ENCODE measurements at regions of chr12 and their contacts with region 1.

Region 1: GRCh38 chr12:100348657-100349454 is 8.0 kb upstream of the SLC17A8 start:
- DNase-seq: no peak
- ATAC-seq: no peak
- H3K4me3 Mint-ChIP-seq: no peak overlapping the region
- H3K27ac Mint-ChIP-seq: no peak overlapping the region
- H3K4me1 Mint-ChIP-seq: no peaks in the 10 kb centered on the region
- H3K27me3 Mint-ChIP-seq: peaks cover 4% of the 10 kb centered on the region

Region 2: GRCh38 chr12:100114574-100114973 is 234.3 kb before region 1 on chr12:
- CTCF ChIA-PET with region 1: no interaction called
- POLR2A ChIA-PET with region 1: no interaction called
- intact Hi-C with region 1: no loop called
- DNase-seq: no peak
- ATAC-seq: no peak
- H3K4me3 Mint-ChIP-seq: no peak overlapping the region
- H3K27ac Mint-ChIP-seq: no peak overlapping the region
- H3K4me1 Mint-ChIP-seq: peaks cover 14% of the 10 kb centered on the region
- H3K27me3 Mint-ChIP-seq: no peaks in the 10 kb centered on the region

Region 3: DNA sequence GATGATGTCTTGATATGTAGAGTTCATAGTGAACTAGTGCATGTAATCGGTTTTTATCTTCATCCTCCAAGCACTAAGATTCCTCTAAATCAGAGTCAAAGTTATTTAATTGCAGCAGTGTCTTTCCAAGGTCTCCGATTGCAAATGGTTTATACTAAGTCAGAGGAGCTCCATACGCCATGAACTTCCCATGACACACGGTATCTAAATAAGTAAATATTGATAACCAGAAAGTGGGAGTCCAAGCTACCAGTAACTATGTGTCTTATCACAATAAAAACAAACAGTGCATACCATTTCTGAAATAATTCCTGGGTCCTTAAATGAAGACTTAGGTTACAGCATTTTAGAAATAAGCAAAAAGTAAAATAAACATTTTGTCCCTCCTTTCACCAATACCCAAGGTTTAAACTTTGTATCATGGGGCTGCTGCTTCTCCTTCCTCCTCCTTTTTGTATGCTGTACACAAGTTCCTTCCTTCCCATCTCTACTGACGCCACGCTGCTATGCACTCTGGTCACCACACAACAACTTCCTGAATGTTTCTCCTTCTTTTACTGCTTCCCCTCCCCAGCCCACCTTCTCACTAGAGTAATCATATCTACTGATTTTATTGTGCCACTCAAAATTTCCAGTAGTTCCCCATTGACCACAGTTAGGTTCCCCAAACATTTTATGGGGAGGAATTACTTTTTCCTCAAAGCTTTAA is 135.5 kb after region 1 on chr12:
- CTCF ChIA-PET with region 1: no interaction called
- POLR2A ChIA-PET with region 1: no interaction called
- intact Hi-C with region 1: no loop called
- DNase-seq: no peak
- ATAC-seq: no peak
- H3K4me3 Mint-ChIP-seq: no peak overlapping the region
- H3K27ac Mint-ChIP-seq: no peak overlapping the region
- H3K4me1 Mint-ChIP-seq: no peaks in the 10 kb centered on the region
- H3K27me3 Mint-ChIP-seq: peaks cover 8% of the 10 kb centered on the region

Region 4: DNA sequence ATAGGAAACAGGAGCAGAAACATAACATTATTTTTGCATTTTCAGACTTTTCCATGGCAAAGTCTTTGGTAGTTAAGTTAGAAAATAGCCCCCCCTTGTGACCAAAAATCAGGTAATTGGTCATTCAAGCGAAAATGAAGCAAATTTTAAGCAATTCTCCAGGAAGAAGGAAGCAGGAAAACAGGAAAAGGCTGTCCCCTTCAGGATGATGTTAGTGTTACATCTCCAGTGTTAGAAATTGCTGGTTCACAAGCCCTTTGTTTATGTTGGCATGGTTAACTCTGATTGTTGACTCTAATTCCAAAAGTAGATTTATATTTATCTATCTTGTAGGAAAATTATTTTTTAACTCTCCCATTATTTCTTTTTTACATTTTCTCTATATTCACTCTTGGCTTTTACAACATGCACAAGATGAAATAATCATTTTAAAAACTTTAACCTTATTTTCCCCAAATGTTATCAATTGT is 205.8 kb after region 1 on chr12:
- CTCF ChIA-PET with region 1: no interaction called
- POLR2A ChIA-PET with region 1: no interaction called
- intact Hi-C with region 1: loop called (anchors 2 to 10 kb)
- DNase-seq: no peak
- ATAC-seq: no peak
- H3K4me3 Mint-ChIP-seq: no peak overlapping the region
- H3K27ac Mint-ChIP-seq: no peak overlapping the region
- H3K4me1 Mint-ChIP-seq: no peaks in the 10 kb centered on the region
- H3K27me3 Mint-ChIP-seq: peaks cover 2% of the 10 kb centered on the region

Measured in activated CD4-positive, alpha-beta T cell treated with anti-CD3 and anti-CD28 coated beads for 36 hours (primary cell).